Gastrocnemius medialis (tissue), 4 donors: ENCODE measurements at regions of chr17 and their contacts with region 1.

Region 1: DNA sequence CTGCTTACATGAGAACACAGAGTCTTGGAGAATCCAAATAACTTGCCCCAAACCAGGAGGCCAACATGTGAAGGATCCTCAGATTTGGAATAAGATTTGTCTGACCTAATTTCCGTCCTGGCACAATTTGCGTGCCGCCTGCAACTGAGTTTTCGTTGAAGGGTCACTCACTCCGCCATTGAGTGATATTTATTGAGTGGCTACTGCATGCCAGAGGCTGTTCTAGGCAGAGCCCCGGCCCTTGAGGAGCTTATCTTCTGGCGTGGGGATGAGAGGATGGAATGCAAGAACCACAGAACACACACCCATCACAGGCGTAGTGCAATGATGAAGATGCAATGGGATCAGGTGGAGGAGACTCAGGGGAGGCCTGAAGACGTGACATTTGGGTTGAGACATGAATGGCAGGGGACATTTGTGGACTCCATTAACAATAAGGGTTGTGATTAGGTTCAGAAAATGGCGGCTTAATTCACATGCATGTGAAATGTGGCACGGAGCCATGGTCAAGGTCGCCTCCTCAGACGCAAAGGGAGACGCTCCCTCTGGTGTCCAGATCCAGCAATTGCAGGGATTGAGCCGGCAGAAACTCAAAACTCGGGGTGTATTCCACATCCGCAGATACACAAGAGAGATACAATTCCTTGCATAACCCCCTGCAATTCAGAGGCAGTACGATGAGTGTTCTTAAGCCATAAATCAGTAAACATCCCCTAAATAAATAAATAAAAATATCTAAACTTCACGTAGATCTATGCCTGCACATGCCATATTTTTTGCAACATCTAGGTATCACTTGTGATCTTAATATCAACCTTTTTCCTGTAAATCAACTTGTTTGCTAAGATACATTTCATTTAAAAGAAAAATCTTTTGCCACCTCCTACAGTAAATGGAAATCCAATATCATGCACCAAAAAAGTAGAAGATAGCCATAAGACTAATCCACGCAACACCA is 57.9 kb upstream of the CACNG4 start:
- DNase-seq: peak; percentile 59 to 70
- ATAC-seq: peak; percentile 54 to 77
- H3K4me3 ChIP-seq: no peak overlapping the region
- H3K27ac ChIP-seq: no peak overlapping the region
- H3K4me1 ChIP-seq: no peaks in the 10 kb centered on the region
- H3K27me3 ChIP-seq: no peaks in the 10 kb centered on the region
- CTCF ChIP-seq: peak; percentile 79 to 87 (median 84)
- POLR2A ChIP-seq: no peak

Region 2: DNA sequence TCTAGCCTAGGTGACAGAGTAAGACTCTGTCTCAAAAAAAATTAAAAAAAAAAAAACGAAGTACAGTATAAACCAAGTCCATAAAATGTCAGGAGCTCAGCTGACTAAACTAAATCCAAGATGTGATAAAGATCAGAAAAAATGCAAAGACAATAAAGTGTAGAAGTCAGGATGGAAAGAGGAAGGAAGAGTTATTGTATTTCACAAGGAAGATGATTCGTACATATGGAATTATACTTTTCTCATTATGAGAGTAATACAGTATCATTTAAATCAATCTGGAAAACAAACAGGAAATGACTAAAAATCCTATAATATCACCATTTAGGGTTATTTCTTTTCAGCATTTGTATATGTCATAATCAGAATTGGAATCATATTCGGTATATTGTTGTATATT is 666.0 kb before region 1 on chr17:
- in situ Hi-C with region 1: loop called in 1 of 4 experiments (anchors 25 kb)
- intact Hi-C with region 1: no loop called
- DNase-seq: no peak
- ATAC-seq: no peak
- H3K4me3 ChIP-seq: no peak overlapping the region
- H3K27ac ChIP-seq: no peak overlapping the region
- H3K4me1 ChIP-seq: no peaks in the 10 kb centered on the region
- H3K27me3 ChIP-seq: no peaks in the 10 kb centered on the region
- CTCF ChIP-seq: no peak
- POLR2A ChIP-seq: no peak

Region 3: GRCh38 chr17:66255112-66255511 is 651.5 kb before region 1 on chr17:
- in situ Hi-C with region 1: loop called in 1 of 4 experiments (anchors 25 kb)
- intact Hi-C with region 1: no loop called
- DNase-seq: peak in 1 of 2 donors; percentile 29
- ATAC-seq: peak; percentile 73 to 85
- H3K4me3 ChIP-seq: no peak overlapping the region
- H3K27ac ChIP-seq: no peak overlapping the region
- H3K4me1 ChIP-seq: no peaks in the 10 kb centered on the region
- H3K27me3 ChIP-seq: no peaks in the 10 kb centered on the region
- CTCF ChIP-seq: peak; percentile 26 to 70 (median 64)
- POLR2A ChIP-seq: no peak

Region 4: DNA sequence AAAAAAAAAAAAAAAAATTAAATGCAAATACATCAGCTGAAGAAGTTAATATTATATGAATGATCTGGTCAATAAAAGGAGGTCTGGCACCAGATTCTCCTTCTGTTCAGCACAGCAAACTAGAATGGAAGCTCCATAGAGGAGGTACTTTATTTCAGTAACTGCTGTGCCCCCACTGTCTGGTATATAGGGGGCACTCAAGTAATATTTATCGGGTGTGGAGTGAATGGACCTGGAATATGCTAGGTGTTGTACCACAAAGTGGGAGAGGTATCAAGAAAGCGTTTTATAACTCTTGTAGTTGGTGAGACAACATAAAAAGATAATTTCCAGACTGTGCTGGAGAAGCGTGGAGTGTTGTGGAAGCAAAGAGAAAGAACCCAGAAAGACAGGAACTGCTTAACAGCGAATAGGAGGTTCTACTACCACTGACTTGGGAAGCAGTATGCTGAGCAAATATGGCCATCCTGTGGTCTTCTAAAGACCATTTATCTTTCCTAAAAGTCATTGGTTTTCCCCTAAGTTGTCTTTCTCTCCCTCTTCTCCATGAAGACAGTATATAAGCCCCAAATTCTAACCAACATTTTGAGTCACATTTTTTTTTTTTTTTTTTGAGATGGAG is 616.4 kb before region 1 on chr17:
- in situ Hi-C with region 1: no loop called
- intact Hi-C with region 1: no loop called
- DNase-seq: no peak
- ATAC-seq: no peak
- H3K4me3 ChIP-seq: no peak overlapping the region
- H3K27ac ChIP-seq: no peak overlapping the region
- H3K4me1 ChIP-seq: no peaks in the 10 kb centered on the region
- H3K27me3 ChIP-seq: no peaks in the 10 kb centered on the region
- CTCF ChIP-seq: peak in 1 of 5 experiments; percentile 39
- POLR2A ChIP-seq: no peak

Region 5: DNA sequence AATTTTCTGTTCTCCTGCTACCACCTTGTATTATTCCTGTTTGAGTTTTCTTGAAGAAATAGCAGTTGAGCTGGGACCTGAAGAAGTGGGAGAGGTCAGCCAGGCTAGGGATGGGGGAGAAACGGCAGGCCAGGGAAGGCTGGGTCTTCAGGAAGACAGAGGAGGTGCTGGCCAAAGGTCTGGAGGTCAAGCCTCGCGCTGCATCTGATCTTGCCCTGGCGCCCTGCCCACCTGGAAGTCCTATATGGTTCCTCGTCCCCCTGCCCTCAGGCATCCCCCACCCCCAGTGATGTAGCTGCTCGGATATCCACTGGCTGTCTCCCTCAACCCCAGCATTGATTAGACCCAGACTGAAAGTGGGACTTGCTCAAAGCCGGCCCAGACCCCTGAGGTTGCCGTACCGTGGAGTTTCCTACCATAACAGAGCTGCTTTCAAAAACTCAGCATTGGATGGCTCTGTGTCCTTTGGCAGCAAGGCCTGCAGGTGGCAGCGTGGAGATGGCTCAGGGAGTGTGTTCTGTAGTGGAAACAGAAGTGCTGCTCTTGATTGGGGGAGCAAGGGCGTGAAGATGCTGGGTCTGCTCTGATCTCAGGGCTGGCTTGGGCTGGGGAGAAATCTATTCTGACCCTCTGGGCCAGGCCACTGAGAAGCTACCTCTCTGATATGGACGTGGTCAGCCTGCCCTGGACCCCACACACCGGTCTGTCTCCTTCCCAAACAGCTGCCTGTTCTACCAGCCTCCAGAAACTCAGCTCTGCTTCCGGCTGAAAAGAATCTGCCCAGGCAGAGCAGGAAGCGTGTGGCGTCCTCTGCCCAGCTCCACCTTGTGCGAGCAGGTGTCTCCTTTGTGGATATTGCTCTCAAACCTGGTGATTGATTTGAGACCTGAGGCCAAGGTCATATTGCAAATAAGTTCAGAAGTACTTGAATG is 178.7 kb before region 1 on chr17:
- in situ Hi-C with region 1: loop called in 1 of 4 experiments (anchors 10 kb)
- intact Hi-C with region 1: no loop called
- DNase-seq: no peak
- ATAC-seq: no peak
- H3K4me3 ChIP-seq: no peak overlapping the region
- H3K27ac ChIP-seq: no peak overlapping the region
- H3K4me1 ChIP-seq: peaks cover 6 to 14% of the 10 kb centered on the region in 2 donors
- H3K27me3 ChIP-seq: no peaks in the 10 kb centered on the region
- CTCF ChIP-seq: peak in 4 of 5 experiments; percentile 17 to 49 (median 36)
- POLR2A ChIP-seq: no peak

Region 6: GRCh38 chr17:66791347-66791746 is 115.3 kb before region 1 on chr17:
- in situ Hi-C with region 1: no loop called
- intact Hi-C with region 1: no loop called
- DNase-seq: peak in 1 of 2 donors; percentile 24
- ATAC-seq: peak in 1 of 2 donors; percentile 34
- H3K4me3 ChIP-seq: no peak overlapping the region
- H3K27ac ChIP-seq: peak overlapping the region in 1 of 4 donors; percentile 5
- H3K4me1 ChIP-seq: peaks cover 0 to 3% of the 10 kb centered on the region in 2 donors
- H3K27me3 ChIP-seq: no peaks in the 10 kb centered on the region
- CTCF ChIP-seq: no peak
- POLR2A ChIP-seq: no peak

Region 7: DNA sequence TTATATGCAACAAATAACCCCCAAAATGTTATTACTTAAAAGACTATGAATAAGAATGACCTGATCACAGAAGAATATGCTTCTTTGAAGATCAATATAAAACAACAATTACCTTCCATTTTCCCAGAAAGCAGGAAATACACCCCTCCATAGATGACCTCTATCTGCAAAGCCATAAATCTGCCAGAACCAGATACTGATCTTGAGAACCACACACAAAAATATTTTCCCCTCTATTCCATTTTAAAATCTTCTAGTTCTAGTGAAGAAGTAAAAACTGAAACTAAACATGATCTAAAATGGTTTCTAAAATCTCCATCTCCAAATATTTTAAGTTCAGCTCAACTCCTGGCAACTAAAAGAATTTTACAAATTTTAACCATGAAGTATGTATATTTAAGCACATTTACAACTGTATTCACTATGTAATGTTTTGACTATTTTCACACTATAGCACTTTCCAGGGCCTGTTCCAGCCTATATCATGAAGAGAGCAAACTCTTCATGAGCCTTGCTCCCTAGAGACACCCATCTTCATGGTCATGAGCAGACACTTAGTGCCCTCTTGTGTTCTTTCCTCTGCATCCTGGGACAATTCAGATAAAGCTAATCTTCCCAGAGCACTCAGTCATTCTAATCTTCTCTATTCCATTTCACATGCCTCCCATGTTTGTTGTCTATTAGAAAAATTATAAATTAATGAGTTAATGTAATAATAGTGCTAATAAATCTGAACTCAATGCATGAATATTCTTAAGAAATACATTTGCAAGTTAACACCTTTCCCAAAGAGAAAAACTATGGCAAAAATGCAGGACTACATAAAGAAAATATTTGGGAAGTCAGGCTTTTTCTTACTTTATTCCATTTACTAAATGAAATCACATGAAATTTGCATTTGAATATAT is 251.4 kb after region 1 on chr17:
- in situ Hi-C with region 1: no loop called
- intact Hi-C with region 1: loop called (anchors 2 kb)
- DNase-seq: no peak
- ATAC-seq: peak in 1 of 2 donors; percentile 91
- H3K4me3 ChIP-seq: no peak overlapping the region
- H3K27ac ChIP-seq: no peak overlapping the region
- H3K4me1 ChIP-seq: peaks cover 8 to 10% of the 10 kb centered on the region in 2 donors
- H3K27me3 ChIP-seq: no peaks in the 10 kb centered on the region
- CTCF ChIP-seq: peak in 3 of 5 experiments; percentile 16 to 45 (median 31)
- POLR2A ChIP-seq: no peak